ENCODE measurements at regions of chr5 and their contacts with region 1.

Region 1: DNA sequence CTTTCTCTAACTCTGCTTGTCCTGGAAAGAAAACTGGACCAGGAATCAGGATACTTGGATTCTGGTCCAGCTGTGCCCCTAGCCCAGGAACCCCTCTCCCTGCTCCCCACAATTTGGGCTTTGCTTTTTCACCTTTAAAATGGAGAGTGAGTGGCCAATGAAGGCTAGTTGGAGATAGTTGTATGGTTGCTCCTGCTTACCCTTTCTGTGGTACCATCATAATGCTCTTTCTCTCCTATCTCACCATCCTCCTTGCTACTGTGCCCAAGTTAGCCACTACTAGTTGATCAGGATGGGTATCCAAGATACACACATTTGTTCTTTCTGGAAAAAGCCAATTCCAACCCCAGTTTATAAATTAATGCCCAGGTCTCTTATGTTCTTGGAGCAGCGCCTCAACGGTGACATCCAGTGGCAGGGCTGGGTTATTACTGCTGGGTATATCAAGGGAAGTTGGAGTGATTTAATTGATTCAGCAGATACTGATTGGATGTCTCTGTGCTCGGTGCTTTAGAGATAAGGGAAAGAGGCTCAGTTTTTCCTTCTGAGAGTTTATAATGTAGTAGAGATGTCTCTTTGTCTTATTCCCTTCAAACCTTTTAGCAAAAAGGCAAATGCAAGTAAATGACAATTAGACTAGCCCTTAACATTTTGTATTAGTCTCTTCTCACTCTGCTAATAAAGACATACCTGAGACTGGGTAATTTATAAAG is 38.6 kb downstream of the FAXDC2 start:
- DNase-seq: peak; percentile 58
- ATAC-seq: peak; percentile 64 to 66

Region 2: DNA sequence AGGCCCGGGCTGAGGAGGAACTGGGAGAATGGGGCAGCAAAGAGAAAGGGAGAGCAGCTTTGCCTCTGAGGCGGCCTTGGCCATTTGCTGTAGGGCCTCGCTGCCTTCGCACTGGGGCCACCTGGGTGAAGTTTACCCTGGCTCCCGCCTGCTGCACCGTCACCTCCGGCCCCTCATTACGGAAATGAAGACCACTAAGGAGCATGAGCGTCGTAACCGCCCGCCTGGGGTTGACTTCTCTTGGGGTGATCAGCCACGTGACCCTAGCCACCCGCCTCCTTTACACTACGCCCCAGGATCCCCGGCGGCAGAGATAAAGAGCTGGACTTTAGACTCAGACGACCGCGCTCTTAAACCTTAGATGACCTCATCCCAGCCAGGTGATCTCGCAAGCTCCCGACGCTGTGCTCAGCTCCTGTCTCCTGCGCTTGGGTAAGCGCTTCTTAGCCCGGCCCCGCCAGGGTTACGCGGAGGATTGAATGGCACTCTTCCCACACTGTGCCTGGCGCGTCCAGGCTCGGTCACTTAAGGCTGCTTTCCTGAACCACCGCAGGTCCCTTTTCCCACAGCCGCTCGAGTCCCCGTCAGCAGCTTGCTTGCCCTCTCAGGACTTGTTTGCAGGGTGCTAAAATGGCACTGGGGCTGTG is 164.6 kb before region 1 on chr5:
- intact Hi-C with region 1: loop called (anchors 2 to 5 kb)
- DNase-seq: peak; percentile 42
- ATAC-seq: peak; percentile 80 to 89

Region 3: GRCh38 chr5:154654486-154655371 is 157.1 kb before region 1 on chr5:
- intact Hi-C with region 1: loop called (anchors 2 to 5 kb)
- DNase-seq: no peak
- ATAC-seq: peak; percentile 31 to 35